ENCODE measurements at regions of chr13 and their contacts with region 1.

Region 1: GRCh38 chr13:42991892-42992763 is at the start of gene EPSTI1:
- DNase-seq: peak; percentile 95
- H3K4me3 Mint-ChIP-seq: peak within 1 kb of the TSS; percentile 99
- H3K27ac Mint-ChIP-seq: peak within 1 kb of the TSS; percentile 99
- H3K4me1 Mint-ChIP-seq: peaks cover 61% of the 10 kb centered on the region
- H3K27me3 Mint-ChIP-seq: no peaks in the 10 kb centered on the region
- total RNA-seq, gene EPSTI1: 16.2 and 16.5 TPM in 2 replicates

Region 2: GRCh38 chr13:41310963-41311606 is 1681.0 kb before region 1 on chr13 and contains the start of gene NAA16:
- intact Hi-C with region 1: loop called (anchors 5 kb)
- DNase-seq: peak; percentile 98
- H3K4me3 Mint-ChIP-seq: peak within 1 kb of the TSS; percentile 94
- H3K27ac Mint-ChIP-seq: peak within 1 kb of the TSS; percentile 93
- H3K4me1 Mint-ChIP-seq: peaks cover 37% of the 10 kb centered on the region
- H3K27me3 Mint-ChIP-seq: no peaks in the 10 kb centered on the region
- total RNA-seq, gene NAA16: 30.3 and 31.2 TPM in 2 replicates

Region 3: DNA sequence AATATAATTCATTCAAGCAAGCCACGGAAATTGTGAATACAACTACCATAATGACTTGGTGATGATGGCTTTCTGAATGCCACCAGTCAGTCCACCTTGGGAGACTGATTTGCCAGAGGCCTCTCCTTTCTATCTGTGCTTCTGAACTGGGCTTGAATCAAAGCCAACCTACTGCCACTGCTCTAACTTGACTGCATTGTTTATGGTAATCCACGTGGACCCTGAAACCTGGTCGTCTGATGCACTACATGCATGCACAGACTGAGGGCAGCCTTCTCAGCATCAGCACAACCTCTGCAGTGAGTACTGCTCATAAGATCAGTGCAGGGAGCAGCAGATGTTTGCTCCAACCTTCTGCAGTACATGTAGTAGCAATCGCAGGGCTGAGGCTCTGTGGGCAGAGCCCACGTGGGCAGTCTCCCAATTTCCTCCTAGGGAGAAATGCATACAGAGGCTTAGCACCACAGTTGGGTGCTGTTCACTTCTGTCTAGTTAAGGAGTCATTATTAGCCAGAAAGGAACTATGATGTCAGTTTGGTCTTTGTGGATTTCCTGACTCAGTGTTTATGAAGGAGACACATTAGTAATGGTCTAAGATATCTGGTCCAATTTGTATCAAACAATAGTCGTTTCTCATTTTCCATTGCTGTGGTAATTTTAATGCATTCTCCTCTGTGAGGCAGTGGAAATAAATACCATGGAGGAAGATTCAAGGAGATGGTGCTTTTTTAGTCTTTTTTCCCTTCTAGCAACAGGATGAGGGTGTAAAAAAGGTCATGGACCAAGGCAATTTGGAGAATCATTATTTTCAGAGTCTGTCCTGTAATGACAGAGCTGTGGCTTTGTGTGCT is 637.7 kb before region 1 on chr13:
- intact Hi-C with region 1: loop called (anchors 2 kb)
- DNase-seq: peak; percentile 80
- H3K4me3 Mint-ChIP-seq: peak overlapping the region; percentile 77
- H3K27ac Mint-ChIP-seq: peak overlapping the region; percentile 99
- H3K4me1 Mint-ChIP-seq: peaks cover 54% of the 10 kb centered on the region
- H3K27me3 Mint-ChIP-seq: no peaks in the 10 kb centered on the region

Region 4: DNA sequence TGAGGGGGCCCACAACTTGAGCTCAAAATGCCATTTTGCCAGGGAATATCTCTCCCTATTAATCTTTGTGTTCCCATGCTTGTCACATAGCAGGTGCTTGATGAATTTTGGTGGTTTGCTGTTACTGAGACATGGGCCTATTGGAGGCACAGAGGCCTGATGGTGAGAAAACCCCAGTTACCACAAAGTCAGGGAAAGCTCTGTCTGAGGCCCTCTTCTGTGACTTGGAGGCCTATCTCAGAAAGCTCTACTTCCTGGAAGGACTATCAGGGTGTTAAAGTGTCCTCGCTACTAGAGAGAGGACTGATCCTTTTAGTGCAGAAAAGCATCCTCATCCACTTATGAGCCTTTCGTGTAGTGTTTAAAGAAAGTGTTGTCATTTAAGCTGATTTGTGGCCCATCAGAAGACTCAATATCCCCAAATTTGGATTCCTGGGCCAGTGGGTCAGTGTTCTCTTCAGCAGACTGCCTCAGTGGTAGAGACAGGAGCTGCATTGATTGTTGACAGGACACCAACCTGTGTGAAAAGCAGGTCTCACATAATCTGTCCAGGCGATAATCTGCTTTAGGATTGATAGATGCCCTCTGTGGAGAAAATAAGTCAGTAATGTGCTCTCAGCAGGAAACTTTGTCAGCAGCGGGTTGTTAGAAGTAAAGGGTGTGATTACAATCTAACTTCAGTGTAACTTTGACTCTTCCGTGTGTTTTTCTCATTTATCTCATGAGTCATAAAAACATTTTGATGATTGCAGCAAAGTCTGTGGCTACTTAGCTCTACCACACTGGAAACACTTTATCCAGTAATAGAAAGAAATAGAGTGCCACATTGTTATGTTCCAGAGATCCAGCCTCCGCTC is 599.2 kb before region 1 on chr13:
- intact Hi-C with region 1: loop called (anchors 5 kb)
- DNase-seq: peak; percentile 86
- H3K4me3 Mint-ChIP-seq: peak overlapping the region; percentile 91
- H3K27ac Mint-ChIP-seq: peak overlapping the region; percentile 97
- H3K4me1 Mint-ChIP-seq: peaks cover 76% of the 10 kb centered on the region
- H3K27me3 Mint-ChIP-seq: no peaks in the 10 kb centered on the region

Region 5: GRCh38 chr13:43023289-43023951 is 31.3 kb after region 1 on chr13 and contains the start of gene DNAJC15:
- intact Hi-C with region 1: loop called (anchors 1 kb)
- DNase-seq: peak; percentile 95
- H3K4me3 Mint-ChIP-seq: peak within 1 kb of the TSS; percentile 98
- H3K27ac Mint-ChIP-seq: peak within 1 kb of the TSS; percentile 94
- H3K4me1 Mint-ChIP-seq: peaks cover 24% of the 10 kb centered on the region
- H3K27me3 Mint-ChIP-seq: no peaks in the 10 kb centered on the region
- total RNA-seq, gene DNAJC15: 16.6 and 17.8 TPM in 2 replicates

Region 6: DNA sequence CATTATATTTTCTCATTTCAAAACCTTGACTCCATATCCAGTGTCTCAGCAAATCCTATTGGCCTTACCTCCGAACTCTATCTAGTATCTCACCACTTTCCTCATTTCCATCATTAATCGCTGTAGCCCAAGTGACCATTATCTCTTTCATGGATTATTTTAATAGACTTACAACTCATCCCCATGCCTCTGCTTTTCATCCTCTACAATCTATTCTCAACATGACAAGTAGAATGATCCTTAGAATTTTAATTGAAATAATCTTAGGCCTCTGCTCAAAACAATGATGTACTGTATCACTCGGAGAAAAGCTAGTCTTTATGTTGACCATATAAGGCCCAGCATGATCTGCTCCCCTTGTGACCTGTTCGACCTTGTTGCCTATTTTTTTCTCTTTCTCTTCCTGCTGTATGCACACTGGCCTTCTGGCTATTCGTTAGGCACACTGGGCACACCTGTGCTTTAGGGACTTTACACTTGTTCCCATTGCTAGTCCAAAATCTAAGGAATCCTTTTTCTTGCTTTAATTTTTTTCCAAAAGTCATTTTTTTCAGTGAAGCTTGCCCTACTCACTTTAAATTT is 52.7 kb after region 1 on chr13:
- intact Hi-C with region 1: loop called (anchors 2 kb)
- DNase-seq: peak; percentile 8
- H3K4me3 Mint-ChIP-seq: peak overlapping the region; percentile 20
- H3K27ac Mint-ChIP-seq: peak overlapping the region; percentile 52
- H3K4me1 Mint-ChIP-seq: peaks cover 54% of the 10 kb centered on the region
- H3K27me3 Mint-ChIP-seq: no peaks in the 10 kb centered on the region

Region 7: GRCh38 chr13:43054803-43055802 is 63.0 kb after region 1 on chr13:
- intact Hi-C with region 1: loop called (anchors 1 kb)
- DNase-seq: peak; percentile 74
- H3K4me3 Mint-ChIP-seq: no peak overlapping the region
- H3K27ac Mint-ChIP-seq: no peak overlapping the region
- H3K4me1 Mint-ChIP-seq: peaks cover 28% of the 10 kb centered on the region
- H3K27me3 Mint-ChIP-seq: no peaks in the 10 kb centered on the region

Measured in activated CD4-positive, alpha-beta T cell treated with anti-CD3 and anti-CD28 coated beads, Interleukin-2, amount 10 ng/mL, durations not matched to agents 24 days and 14 days (primary cell).